CD8-positive, alpha-beta T cell (primary cell): ENCODE measurements at regions of chr20 and their contacts with region 1.

Region 1: GRCh38 chr20:12180107-12180661 is 262.5 kb downstream of the BTBD3 start:
- DNase-seq: no peak
- ATAC-seq: no peak
- H3K4me3 ChIP-seq: no peak overlapping the region
- H3K4me3 Mint-ChIP-seq: no peak overlapping the region
- H3K27ac ChIP-seq: no peak overlapping the region
- H3K27ac Mint-ChIP-seq: no peak overlapping the region
- H3K4me1 ChIP-seq: no peaks in the 10 kb centered on the region
- H3K4me1 Mint-ChIP-seq: no peaks in the 10 kb centered on the region
- H3K27me3 ChIP-seq: no peaks in the 10 kb centered on the region
- H3K27me3 Mint-ChIP-seq: no peaks in the 10 kb centered on the region
- CTCF ChIP-seq: no peak

Region 2: GRCh38 chr20:11569163-11569562 is 611.0 kb before region 1 on chr20:
- CTCF ChIA-PET with region 1: no interaction called
- POLR2A ChIA-PET with region 1: no interaction called
- intact Hi-C with region 1: loop called in 1 of 2 experiments (anchors 5 kb)
- DNase-seq: no peak
- ATAC-seq: no peak
- H3K4me3 ChIP-seq: no peak overlapping the region
- H3K4me3 Mint-ChIP-seq: no peak overlapping the region
- H3K27ac ChIP-seq: no peak overlapping the region
- H3K27ac Mint-ChIP-seq: no peak overlapping the region
- H3K4me1 ChIP-seq: no peaks in the 10 kb centered on the region
- H3K4me1 Mint-ChIP-seq: no peaks in the 10 kb centered on the region
- H3K27me3 ChIP-seq: no peaks in the 10 kb centered on the region
- H3K27me3 Mint-ChIP-seq: no peaks in the 10 kb centered on the region
- CTCF ChIP-seq: no peak

Region 3: DNA sequence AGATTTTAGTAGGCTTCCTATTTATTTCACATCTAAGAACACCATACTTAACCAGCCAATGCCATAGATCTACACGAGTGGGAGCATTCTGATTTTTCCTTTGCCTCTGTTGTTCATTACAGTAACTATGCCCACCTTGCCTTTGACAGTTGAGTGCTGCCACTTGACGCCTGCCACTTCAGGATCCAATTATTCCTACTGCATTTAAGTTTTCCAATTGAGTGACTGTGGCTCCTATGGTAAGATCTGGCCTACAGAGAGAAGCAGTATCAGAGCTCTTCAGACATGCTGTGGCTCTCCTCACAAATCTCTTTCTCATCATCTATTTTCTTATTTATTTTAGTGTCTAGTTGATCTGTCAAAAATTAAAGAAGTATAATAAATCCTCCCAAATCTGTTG is 425.6 kb after region 1 on chr20:
- CTCF ChIA-PET with region 1: no interaction called
- POLR2A ChIA-PET with region 1: no interaction called
- intact Hi-C with region 1: no loop called
- DNase-seq: no peak
- ATAC-seq: no peak
- H3K4me3 ChIP-seq: no peak overlapping the region
- H3K4me3 Mint-ChIP-seq: no peak overlapping the region
- H3K27ac ChIP-seq: no peak overlapping the region
- H3K27ac Mint-ChIP-seq: no peak overlapping the region
- H3K4me1 ChIP-seq: no peaks in the 10 kb centered on the region
- H3K4me1 Mint-ChIP-seq: no peaks in the 10 kb centered on the region
- H3K27me3 ChIP-seq: no peaks in the 10 kb centered on the region
- H3K27me3 Mint-ChIP-seq: no peaks in the 10 kb centered on the region
- CTCF ChIP-seq: no peak